Vagina (tissue), 2 donors: ENCODE measurements at regions of chr11 and their contacts with region 1.

Region 1: DNA sequence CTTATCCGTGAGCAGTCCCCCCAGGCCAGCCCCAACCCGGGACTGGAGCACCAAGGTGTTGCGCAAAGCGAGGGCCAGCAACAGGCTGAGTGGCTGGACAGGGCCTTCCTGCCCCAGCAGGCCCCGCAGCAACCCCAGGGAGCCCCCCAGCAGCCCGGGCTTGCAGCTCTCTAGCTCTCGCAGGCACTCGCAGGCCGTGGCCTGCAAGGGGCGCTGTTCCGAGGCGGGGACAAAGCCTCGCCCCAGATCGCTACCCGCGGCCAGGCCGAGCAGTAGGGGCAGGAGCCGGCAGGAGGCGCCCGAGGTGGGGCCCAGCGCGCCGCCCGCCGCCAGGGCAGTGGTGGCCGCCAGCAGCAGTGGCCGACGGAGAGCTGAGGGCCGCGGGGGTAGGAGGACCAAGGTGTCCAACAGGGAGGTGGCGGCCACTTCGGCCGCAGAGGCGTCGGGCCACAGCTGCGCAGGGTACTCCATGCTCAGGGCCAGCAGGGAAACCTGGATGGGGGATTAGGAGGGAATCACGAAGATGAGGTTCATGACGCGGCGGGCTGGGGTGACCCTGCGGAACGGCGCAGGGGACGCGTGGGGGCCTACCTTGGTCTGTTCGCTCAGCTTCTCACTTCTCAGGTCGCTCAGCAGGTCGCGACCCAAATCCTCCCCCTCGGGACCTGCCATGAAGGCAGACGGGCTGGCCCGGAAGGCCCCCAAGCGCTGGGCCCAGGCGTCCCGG is 762 bp downstream of the AP5B1 start:
- DNase-seq: peak; percentile 87 to 95
- H3K4me3 ChIP-seq: peak overlapping the region; percentile 79 to 99
- H3K27ac ChIP-seq: peak overlapping the region; percentile 76
- H3K4me1 ChIP-seq: peaks cover 34% of the 10 kb centered on the region
- H3K27me3 ChIP-seq: no peaks in the 10 kb centered on the region
- CTCF ChIP-seq: peak; percentile 31 to 75 (median 36)
- POLR2A ChIP-seq: no peak

Region 2: DNA sequence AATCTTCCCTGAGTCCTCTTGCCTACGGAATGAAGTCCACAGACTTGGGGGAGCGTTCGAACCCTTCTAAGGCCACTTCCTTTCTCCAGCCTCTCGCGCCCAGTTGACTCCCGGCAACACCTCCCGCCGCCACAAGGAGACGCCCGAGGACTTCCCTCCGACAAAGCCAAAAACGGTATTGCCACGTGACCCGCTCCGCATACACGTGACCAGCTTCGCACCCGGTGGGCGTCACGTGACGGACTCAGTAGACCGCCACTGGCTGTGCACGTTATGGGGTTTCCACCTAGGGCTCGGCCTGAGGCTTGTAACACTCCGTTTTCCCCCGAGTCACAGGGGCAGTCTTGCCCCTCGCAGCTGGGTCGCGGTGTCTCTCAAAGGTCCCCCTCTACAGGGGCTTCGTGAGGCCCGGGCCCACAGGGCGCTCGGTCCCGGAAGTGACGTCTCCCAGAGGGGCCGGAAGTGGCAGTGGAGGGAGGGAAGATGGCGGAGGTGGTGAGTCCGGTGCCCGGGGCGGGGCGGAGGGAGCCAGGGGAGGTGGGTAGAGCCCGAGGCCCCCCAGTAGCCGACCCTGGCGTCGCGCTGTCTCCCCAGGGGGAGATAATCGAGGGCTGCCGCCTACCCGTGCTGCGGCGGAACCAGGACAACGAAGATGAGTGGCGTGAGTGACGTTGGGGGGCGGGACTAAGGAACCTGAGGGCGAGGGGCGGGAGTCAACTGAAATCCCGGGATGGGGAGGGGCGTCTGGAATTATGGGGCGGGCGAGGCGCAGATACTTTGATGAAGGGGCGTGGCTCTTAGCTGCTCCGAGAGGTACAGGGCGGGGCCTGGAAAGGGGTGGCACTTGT is 68.0 kb before region 1 on chr11 and contains the start of gene KAT5:
- intact Hi-C with region 1: loop called (anchors 5 kb)
- DNase-seq: peak in 1 of 2 donors; percentile 99
- H3K4me3 ChIP-seq: peak within 1 kb of the TSS; percentile 55 to 60
- H3K27ac ChIP-seq: peak within 1 kb of the TSS; percentile 99
- H3K4me1 ChIP-seq: peaks cover 20% of the 10 kb centered on the region
- H3K27me3 ChIP-seq: no peaks in the 10 kb centered on the region
- CTCF ChIP-seq: peak; percentile 91 to 100 (median 97)
- POLR2A ChIP-seq: peak in 1 of 2 donors; percentile 76
- total RNA-seq, gene KAT5: 58.9 TPM